ENCODE measurements at regions of chr6 and their contacts with region 1.

Region 1: DNA sequence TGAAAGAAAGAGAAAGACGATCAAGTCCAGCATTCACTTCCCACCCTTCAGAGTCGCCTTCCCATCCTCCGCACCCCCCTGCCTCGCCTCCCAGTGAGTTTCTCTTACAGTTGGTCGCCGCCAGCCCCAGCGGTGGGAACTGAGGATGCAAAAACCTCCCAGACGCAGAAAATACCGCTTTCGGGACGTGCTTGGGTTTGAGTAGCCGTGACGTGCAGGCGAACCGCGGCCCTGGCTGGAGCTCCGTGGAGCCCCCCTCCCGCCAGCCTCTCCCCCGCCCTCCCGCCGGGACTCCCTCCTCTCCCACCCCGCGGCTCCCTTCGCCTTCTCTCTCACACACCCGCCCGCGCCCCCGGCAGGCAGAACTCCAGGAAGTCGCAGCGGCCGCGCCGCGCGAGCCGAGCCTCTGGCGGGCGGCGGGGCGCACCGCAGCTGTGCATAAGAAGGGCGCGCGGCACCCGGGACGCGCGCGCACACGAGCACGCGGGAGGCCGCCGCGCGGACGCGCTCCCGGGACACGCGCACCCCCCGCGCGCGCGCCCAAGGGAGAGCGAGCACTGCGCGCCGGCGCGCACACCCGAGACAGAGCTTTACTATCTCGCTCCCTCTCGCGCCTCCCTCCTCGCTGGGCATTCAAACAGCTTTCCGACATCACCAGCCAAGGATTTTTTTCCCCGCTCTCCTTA is at the start of gene ADGRB3:
- DNase-seq: peak; percentile 88
- ATAC-seq: peak; percentile 95
- total RNA-seq, gene ADGRB3: 0.89 TPM

Region 2: GRCh38 chr6:68778356-68779020 is 143.6 kb after region 1 on chr6:
- intact Hi-C with region 1: loop called (anchors 5 kb)
- DNase-seq: no peak
- ATAC-seq: peak; percentile 90

Measured in left ventricle myocardium superior (tissue), 1 donor.